Left colon (tissue), 2 donors: ENCODE measurements at regions of chr10 and their contacts with region 1.

Region 1: GRCh38 chr10:7410862-7411670 is at the start of gene SFMBT2:
- DNase-seq: peak; percentile 34 to 49
- ATAC-seq: peak; percentile 64
- total RNA-seq, gene SFMBT2: 3.4 to 7.5 TPM

Region 2: GRCh38 chr10:6667679-6668270 is 743.3 kb before region 1 on chr10:
- intact Hi-C with region 1: loop called in 1 of 2 experiments (anchors 10 kb)
- DNase-seq: peak in 1 of 2 donors; percentile 21
- ATAC-seq: peak; percentile 34

Region 3: DNA sequence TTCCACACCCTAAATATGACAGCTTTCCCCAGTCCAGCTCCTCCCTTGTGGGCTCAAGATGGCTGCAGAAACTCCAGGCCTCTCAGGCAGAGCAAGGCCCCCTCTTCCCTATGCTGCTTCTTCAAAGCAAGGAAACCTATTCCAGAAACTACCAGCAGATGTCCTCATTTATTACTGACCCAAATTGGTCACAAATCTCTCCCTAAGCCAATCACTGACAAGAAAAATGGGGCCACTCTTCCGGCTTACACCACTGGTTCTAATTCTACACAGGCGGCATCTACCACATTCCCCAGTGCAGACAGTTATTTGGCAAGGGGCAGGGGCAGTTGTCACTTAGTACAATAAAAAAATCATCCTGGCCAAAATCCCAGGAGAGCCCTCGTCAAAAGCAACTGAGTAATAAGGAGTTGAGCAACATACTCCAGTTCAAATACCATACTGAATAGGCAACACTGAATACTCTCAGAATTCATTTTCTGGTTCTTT is 150.6 kb before region 1 on chr10:
- intact Hi-C with region 1: loop called in 1 of 2 experiments (anchors 5 kb)
- DNase-seq: peak in 1 of 2 donors; percentile 40
- ATAC-seq: peak; percentile 44